Mammary epithelial cell (primary cell): ENCODE measurements at regions of chr11 and their contacts with region 1.

Region 1: GRCh38 chr11:77473801-77474683 is at the start of gene PAK1:
- DNase-seq: peak; percentile 88
- H3K4me3 ChIP-seq: peak within 1 kb of the TSS; percentile 71 to 85 (median 80)
- H3K27ac ChIP-seq: peak within 1 kb of the TSS; percentile 11
- H3K4me1 ChIP-seq: peaks cover 20% of the 10 kb centered on the region
- H3K27me3 ChIP-seq: no peaks in the 10 kb centered on the region
- CTCF ChIP-seq: peak in 1 of 2 donors; percentile 46
- total RNA-seq, gene PAK1: 60.5 to 87.6 TPM

Region 2: DNA sequence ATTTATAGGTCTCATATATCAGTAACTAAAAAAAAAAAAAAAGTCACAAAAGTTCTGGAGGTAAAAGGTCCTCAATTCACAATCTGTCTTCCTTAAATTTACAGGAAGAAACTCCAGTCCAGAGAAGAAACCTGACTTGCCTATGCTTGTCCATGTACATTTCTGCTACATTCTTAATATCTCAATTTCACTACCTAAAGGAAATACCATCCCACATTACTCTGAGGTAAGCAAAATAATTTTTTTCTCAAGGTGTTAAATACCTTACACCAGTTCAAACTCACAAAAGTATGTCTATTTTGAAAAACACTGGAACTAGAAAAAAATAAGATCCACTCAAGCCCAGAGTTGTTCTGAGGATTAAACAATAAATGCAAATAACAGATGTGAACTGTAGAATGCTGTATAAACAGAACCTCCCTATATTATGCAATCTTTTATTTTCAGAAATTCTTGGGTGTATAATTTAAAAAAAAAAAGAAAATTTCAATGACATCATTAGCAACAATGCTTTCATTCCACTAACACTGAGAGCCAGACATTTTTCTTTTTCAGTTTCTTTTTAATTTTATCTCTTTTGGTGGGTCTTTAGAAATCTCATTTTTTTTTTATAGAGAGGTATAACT is 122.6 kb before region 1 on chr11:
- CTCF ChIA-PET with region 1: no interaction called
- dilution Hi-C with region 1: no loop called
- in situ Hi-C with region 1: no loop called
- intact Hi-C with region 1: loop called (anchors 5 kb)
- DNase-seq: peak; percentile 69
- H3K4me3 ChIP-seq: peak overlapping the region in 1 of 3 experiments; percentile 17
- H3K27ac ChIP-seq: peak overlapping the region; percentile 79
- H3K4me1 ChIP-seq: peaks cover 29% of the 10 kb centered on the region
- H3K27me3 ChIP-seq: no peaks in the 10 kb centered on the region
- CTCF ChIP-seq: no peak

Region 3: GRCh38 chr11:77411717-77412441 is 62.2 kb before region 1 on chr11:
- CTCF ChIA-PET with region 1: no interaction called
- dilution Hi-C with region 1: no loop called
- in situ Hi-C with region 1: no loop called
- intact Hi-C with region 1: loop called (anchors 2 kb)
- DNase-seq: peak; percentile 92
- H3K4me3 ChIP-seq: peak overlapping the region; percentile 65 to 87 (median 76)
- H3K27ac ChIP-seq: peak overlapping the region; percentile 58
- H3K4me1 ChIP-seq: peaks cover 32% of the 10 kb centered on the region
- H3K27me3 ChIP-seq: no peaks in the 10 kb centered on the region
- CTCF ChIP-seq: peak in 1 of 2 donors; percentile 36

Region 4: GRCh38 chr11:77424644-77425043 is 49.4 kb before region 1 on chr11:
- CTCF ChIA-PET with region 1: no interaction called
- dilution Hi-C with region 1: no loop called
- in situ Hi-C with region 1: no loop called
- intact Hi-C with region 1: no loop called
- DNase-seq: no peak
- H3K4me3 ChIP-seq: no peak overlapping the region
- H3K27ac ChIP-seq: no peak overlapping the region
- H3K4me1 ChIP-seq: no peaks in the 10 kb centered on the region
- H3K27me3 ChIP-seq: no peaks in the 10 kb centered on the region
- CTCF ChIP-seq: no peak

Region 5: DNA sequence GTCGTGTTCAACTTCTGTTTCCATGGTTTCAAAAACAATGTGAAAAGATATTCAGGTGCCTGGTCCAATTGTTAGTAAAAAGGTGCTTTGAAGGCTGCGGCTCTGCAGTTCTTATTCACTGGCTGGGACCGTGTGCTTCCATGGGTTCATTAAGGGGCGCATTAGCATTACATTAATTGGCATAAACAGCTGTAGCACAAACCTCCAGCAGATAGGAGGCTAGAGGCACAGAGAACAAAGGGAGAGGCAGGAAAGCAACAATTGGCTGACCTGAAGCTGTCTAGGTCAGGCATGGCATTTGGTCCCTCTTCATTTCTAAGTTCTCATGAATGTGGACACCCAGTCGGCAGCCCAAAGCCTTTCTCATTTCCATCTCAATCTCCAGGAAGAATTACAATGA is 16.7 kb before region 1 on chr11:
- CTCF ChIA-PET with region 1: no interaction called
- dilution Hi-C with region 1: no loop called
- in situ Hi-C with region 1: no loop called
- intact Hi-C with region 1: no loop called
- DNase-seq: no peak
- H3K4me3 ChIP-seq: no peak overlapping the region
- H3K27ac ChIP-seq: no peak overlapping the region
- H3K4me1 ChIP-seq: no peaks in the 10 kb centered on the region
- H3K27me3 ChIP-seq: no peaks in the 10 kb centered on the region
- CTCF ChIP-seq: no peak

Region 6: DNA sequence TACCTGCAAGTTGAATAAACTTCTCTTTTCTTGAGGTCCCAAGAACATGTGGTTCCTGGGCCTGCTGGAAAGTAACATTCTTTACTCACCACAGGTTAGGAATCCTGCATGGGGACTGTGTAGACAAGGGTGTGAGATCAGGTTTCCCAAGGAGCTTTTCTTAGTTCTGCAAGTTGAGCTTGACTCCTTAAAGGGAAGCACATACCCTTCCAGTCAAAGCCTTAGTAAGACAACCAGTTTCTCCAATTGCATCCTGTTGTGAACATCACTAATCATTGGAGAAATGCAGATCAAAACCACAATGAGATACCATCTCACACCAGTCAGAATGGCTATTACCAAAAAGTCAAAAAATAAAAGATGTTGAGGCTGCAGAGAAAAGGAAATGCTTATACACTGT is 48.2 kb after region 1 on chr11:
- CTCF ChIA-PET with region 1: no interaction called
- dilution Hi-C with region 1: loop called (anchors 5 kb)
- in situ Hi-C with region 1: no loop called
- intact Hi-C with region 1: no loop called
- DNase-seq: peak; percentile 21
- H3K4me3 ChIP-seq: no peak overlapping the region
- H3K27ac ChIP-seq: no peak overlapping the region
- H3K4me1 ChIP-seq: no peaks in the 10 kb centered on the region
- H3K27me3 ChIP-seq: no peaks in the 10 kb centered on the region
- CTCF ChIP-seq: no peak

Region 7: GRCh38 chr11:77557554-77557953 is 83.5 kb after region 1 on chr11:
- CTCF ChIA-PET with region 1: no interaction called
- dilution Hi-C with region 1: loop called (anchors 5 kb)
- in situ Hi-C with region 1: no loop called
- intact Hi-C with region 1: no loop called
- DNase-seq: no peak
- H3K4me3 ChIP-seq: no peak overlapping the region
- H3K27ac ChIP-seq: no peak overlapping the region
- H3K4me1 ChIP-seq: peaks cover 20% of the 10 kb centered on the region
- H3K27me3 ChIP-seq: no peaks in the 10 kb centered on the region
- CTCF ChIP-seq: peak; percentile 16 to 18